ENCODE measurements at regions of chr7 and their contacts with region 1.

Region 1: GRCh38 chr7:100171087-100171681 is 2.8 kb upstream of the GAL3ST4 start:
- DNase-seq: no peak
- H3K4me3 Mint-ChIP-seq: peak overlapping the region; percentile 47
- H3K27ac Mint-ChIP-seq: no peak overlapping the region
- H3K4me1 Mint-ChIP-seq: peaks cover 53% of the 10 kb centered on the region
- H3K27me3 Mint-ChIP-seq: peaks cover 51% of the 10 kb centered on the region

Region 2: DNA sequence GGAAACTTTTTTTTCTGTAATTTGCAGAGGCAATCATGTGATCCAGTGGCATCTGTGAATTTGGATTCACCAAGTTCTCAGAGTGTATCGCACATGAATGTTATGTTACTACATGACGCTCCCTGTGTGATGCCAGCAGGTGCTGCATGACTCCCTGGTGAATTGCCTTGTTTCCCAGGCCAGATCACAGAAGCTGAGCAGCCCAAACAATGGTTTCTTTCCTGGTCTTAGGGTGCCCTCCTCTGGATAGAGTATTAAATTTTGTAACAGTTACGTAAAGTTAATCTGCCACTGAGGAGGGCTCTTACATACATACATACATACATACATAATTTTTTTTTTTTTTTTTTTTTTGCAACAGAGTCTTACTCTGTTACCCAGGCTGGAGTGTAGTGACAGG is 118.0 kb before region 1 on chr7:
- CTCF ChIA-PET with region 1: no interaction called
- POLR2A ChIA-PET with region 1: no interaction called
- DNase-seq: peak; percentile 31
- H3K4me3 Mint-ChIP-seq: no peak overlapping the region
- H3K27ac Mint-ChIP-seq: no peak overlapping the region
- H3K4me1 Mint-ChIP-seq: peaks cover 15% of the 10 kb centered on the region
- H3K27me3 Mint-ChIP-seq: no peaks in the 10 kb centered on the region

Region 3: GRCh38 chr7:100158229-100159098 is 12.7 kb before region 1 on chr7 and contains the start of gene TRAPPC14:
- CTCF ChIA-PET with region 1: interaction called, 4 read pairs
- POLR2A ChIA-PET with region 1: interaction called, 27 read pairs
- DNase-seq: peak; percentile 93
- H3K4me3 Mint-ChIP-seq: peak within 1 kb of the TSS; percentile 78
- H3K27ac Mint-ChIP-seq: peak within 1 kb of the TSS; percentile 75
- H3K4me1 Mint-ChIP-seq: peaks cover 59% of the 10 kb centered on the region
- H3K27me3 Mint-ChIP-seq: no peaks in the 10 kb centered on the region
- total RNA-seq, gene TRAPPC14: 37.8 to 41.2 TPM

Region 4: GRCh38 chr7:100200693-100201092 is 29.5 kb after region 1 on chr7:
- CTCF ChIA-PET with region 1: no interaction called
- POLR2A ChIA-PET with region 1: no interaction called
- DNase-seq: no peak
- H3K4me3 Mint-ChIP-seq: no peak overlapping the region
- H3K27ac Mint-ChIP-seq: no peak overlapping the region
- H3K4me1 Mint-ChIP-seq: peaks cover 5% of the 10 kb centered on the region
- H3K27me3 Mint-ChIP-seq: peaks cover 9% of the 10 kb centered on the region

Measured in activated CD4-positive, alpha-beta memory T cell treated with anti-CD3 and anti-CD28 coated beads, Interleukin-2, amount 10 ng/mL, durations not matched to agents 7 days and 5 days (primary cell).